K562 (cell line): ENCODE measurements at regions of chr11 and their contacts with region 1.

Region 1: DNA sequence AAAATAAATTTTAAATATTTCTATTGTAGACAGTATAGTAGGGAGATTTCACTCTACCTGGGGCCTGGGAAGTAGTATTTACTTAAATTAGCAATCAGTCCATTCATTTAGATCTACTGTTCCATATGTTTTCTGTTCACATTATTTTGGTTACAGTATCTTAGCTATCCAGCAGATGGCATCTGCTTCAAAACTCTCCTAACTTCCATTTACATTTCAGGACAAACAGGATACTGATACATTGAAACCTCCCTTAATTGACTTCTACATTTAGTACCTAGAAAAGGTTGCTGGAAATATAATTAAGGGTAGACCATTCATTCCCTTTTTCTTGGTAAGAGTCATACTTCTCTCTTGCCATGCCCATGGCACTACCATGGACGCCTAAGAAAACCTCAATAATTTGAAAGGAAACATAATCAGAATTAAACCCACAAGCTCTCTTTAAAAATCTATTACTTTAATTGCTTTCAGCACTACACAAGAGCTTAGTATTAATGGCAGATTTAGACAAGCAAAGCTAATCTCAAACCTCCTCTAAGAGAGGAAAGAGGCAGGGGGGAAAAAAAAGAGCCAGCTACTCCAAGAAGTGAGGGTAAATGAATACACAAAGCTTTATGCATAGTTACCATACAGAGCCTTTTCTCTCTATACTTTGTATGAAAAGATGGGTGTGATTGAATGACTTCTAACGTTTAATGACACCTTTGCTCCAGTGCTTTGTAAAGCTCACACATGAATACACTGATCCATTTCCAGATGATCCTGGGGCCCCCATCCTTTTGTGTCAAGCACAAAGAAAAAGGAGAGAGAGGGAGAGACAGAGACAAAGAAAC is 131.2 kb upstream of the MTMR2 start:
- DNase-seq: peak; percentile 28 to 43 (median 32)
- ATAC-seq: peak; percentile 88
- H3K4me3 ChIP-seq: no peak overlapping the region
- H3K27ac ChIP-seq: no peak overlapping the region
- H3K4me1 ChIP-seq: no peaks in the 10 kb centered on the region; a peak in 1 of 5 replicates
- H3K27me3 ChIP-seq: no peaks in the 10 kb centered on the region
- CTCF ChIP-seq: peak; percentile 45 to 75 (median 57); a peak in 4 of 6 replicates
- EP300 ChIP-seq: no peak
- POLR2A ChIP-seq: no peak
- RAD21 ChIP-seq: peak; percentile 82 to 92

Region 2: DNA sequence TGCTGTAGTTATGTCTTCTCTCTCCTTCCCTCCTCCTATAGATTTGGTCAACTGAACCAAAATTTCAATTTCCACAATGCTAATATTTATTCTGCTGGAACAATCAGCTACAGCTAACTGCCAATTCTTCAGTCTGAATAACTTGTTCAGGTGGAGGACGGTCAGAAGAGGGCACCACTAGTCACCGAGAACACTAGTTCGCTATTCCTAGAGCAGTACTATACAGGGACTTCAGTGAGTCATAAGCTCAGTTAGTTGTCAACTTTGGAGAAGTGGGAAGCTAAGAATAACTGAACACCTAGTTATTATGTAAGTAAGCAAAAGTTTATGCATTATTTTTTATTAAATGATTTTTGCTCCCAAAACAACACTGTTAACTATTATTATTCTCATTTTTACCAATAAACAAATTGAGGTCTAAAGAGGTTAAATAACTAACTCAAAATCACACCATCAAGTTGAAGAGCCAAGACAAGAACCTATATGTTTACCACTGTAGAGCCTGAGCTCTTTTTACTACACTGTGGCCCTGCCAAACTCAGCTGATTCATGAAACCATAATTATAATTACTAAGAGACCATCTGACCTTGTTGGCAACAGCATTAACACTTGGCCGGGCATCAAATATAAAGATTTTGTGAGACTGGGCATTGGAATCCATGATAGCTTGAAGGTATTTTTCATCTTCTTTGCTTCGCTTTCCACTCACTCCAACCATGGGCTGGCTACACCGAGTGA is 205.8 kb before region 1 on chr11:
- CTCF ChIA-PET with region 1: no interaction called
- POLR2A ChIA-PET with region 1: no interaction called
- in situ Hi-C with region 1: no loop called
- intact Hi-C with region 1: loop called (anchors 2 kb)
- DNase-seq: peak; percentile 18 to 65 (median 30)
- ATAC-seq: peak; percentile 96
- H3K4me3 ChIP-seq: no peak overlapping the region
- H3K27ac ChIP-seq: no peak overlapping the region
- H3K4me1 ChIP-seq: no peaks in the 10 kb centered on the region
- H3K27me3 ChIP-seq: no peaks in the 10 kb centered on the region
- CTCF ChIP-seq: peak; percentile 50 to 70 (median 61)
- EP300 ChIP-seq: no peak
- POLR2A ChIP-seq: no peak
- RAD21 ChIP-seq: peak; percentile 77 to 85

Region 3: GRCh38 chr11:95977534-95978174 is 77.4 kb before region 1 on chr11:
- CTCF ChIA-PET with region 1: no interaction called
- POLR2A ChIA-PET with region 1: no interaction called
- in situ Hi-C with region 1: no loop called
- intact Hi-C with region 1: no loop called
- DNase-seq: no peak
- ATAC-seq: no peak
- H3K4me3 ChIP-seq: no peak overlapping the region
- H3K27ac ChIP-seq: no peak overlapping the region
- H3K4me1 ChIP-seq: no peaks in the 10 kb centered on the region
- H3K27me3 ChIP-seq: no peaks in the 10 kb centered on the region
- CTCF ChIP-seq: no peak
- EP300 ChIP-seq: no peak
- POLR2A ChIP-seq: no peak
- RAD21 ChIP-seq: no peak

Region 4: DNA sequence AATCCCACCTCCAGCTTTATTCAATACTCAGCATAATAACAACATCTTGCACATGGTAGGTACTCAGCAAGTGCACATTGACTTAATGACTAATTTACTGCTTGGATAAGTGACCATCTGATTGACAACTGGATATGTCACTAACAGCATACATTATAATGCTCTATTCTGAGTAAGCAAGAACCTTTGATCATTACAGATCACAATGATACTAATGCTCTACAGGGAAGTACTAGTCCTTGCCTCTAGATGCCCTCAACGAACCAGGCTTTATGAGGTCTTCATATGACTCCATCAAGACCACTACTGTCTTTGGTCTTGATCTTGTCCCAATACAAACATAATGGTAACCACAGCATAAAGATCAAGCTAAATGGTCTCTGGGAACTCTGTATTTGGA is 36.4 kb after region 1 on chr11:
- CTCF ChIA-PET with region 1: no interaction called
- POLR2A ChIA-PET with region 1: no interaction called
- in situ Hi-C with region 1: no loop called
- intact Hi-C with region 1: no loop called
- DNase-seq: no peak
- ATAC-seq: peak; percentile 67
- H3K4me3 ChIP-seq: no peak overlapping the region
- H3K27ac ChIP-seq: no peak overlapping the region
- H3K4me1 ChIP-seq: peaks cover 2 to 4% of the 10 kb centered on the region in 2 experiments; a peak in 4 of 5 replicates
- H3K27me3 ChIP-seq: no peaks in the 10 kb centered on the region
- CTCF ChIP-seq: peak; percentile 26 to 38 (median 29); a peak in 3 of 6 replicates
- EP300 ChIP-seq: no peak
- POLR2A ChIP-seq: no peak
- RAD21 ChIP-seq: peak; percentile 29 to 58; a peak in 3 of 4 replicates

Region 5: GRCh38 chr11:96155627-96156378 is 100.7 kb after region 1 on chr11:
- CTCF ChIA-PET with region 1: interaction called, 7 read pairs
- POLR2A ChIA-PET with region 1: no interaction called
- in situ Hi-C with region 1: no loop called
- intact Hi-C with region 1: loop called (anchors 1 kb)
- DNase-seq: peak; percentile 66 to 87 (median 76)
- ATAC-seq: peak; percentile 86
- H3K4me3 ChIP-seq: no peak overlapping the region
- H3K27ac ChIP-seq: peak overlapping the region; percentile 87
- H3K4me1 ChIP-seq: peaks cover 12 to 36% of the 10 kb centered on the region in 2 experiments; a peak in 4 of 5 replicates
- H3K27me3 ChIP-seq: no peaks in the 10 kb centered on the region
- CTCF ChIP-seq: peak; percentile 51 to 64 (median 53)
- EP300 ChIP-seq: 0 out of 2 replicates have a peak, but pooled peaks have one; percentile 4
- POLR2A ChIP-seq: no peak; the same call in 1 of the 2 replicates
- RAD21 ChIP-seq: peak; percentile 59 to 70

Region 6: GRCh38 chr11:96215110-96215782 is 160.2 kb after region 1 on chr11:
- CTCF ChIA-PET with region 1: no interaction called
- POLR2A ChIA-PET with region 1: no interaction called
- in situ Hi-C with region 1: no loop called
- intact Hi-C with region 1: loop called (anchors 2 kb)
- DNase-seq: peak in 2 of 4 experiments; percentile 16 to 20
- ATAC-seq: peak; percentile 22
- H3K4me3 ChIP-seq: no peak overlapping the region
- H3K27ac ChIP-seq: peak overlapping the region; percentile 50
- H3K4me1 ChIP-seq: peaks cover 9 to 63% of the 10 kb centered on the region in 2 experiments
- H3K27me3 ChIP-seq: no peaks in the 10 kb centered on the region
- CTCF ChIP-seq: no peak
- EP300 ChIP-seq: no peak
- POLR2A ChIP-seq: no peak
- RAD21 ChIP-seq: no peak

Region 7: DNA sequence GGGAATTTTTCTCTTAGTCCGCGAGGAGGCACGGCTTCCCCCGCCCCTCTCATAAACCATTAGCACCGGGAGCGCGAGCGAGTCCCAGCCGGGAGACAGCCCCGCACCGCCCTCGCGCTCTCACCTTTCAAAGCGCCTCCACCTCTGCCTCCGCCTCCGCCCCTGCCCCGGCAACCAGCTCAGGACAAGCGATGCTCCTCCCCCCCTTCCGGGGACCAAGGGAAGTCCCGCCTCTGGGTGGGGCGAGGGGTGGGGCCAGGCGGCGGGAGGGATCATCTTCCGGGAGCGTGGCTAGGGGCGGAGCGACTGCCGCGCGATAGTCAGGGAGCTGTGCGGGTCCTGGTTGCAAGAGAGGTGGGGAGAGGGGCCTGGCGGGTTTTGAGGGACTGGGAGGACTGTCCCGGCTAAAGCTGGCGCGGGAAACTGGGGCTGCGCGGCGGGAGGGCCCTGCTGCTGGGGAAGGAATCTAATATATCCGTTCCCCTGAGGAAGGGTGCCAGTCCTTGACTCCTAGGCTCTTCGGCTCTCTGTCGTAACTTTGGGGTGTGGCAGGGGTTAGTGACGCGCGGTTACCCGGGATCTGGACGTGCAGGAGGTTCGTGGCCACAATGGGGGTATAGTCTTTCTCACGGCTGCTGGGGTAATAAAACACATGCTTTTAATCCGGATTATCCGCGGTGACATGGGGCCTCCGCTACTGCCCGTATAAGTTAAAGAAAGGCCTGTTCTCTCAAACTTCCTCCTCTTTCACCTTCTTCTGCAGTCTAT is 334.8 kb after region 1 on chr11 and contains the starts of genes CCDC82 and JRKL:
- CTCF ChIA-PET with region 1: interaction called, 3 read pairs
- POLR2A ChIA-PET with region 1: interaction called, 5 read pairs
- in situ Hi-C with region 1: no loop called
- intact Hi-C with region 1: loop called (anchors 2 kb)
- DNase-seq: peak; percentile 97 to 98 (median 98)
- ATAC-seq: peak; percentile 97
- H3K4me3 ChIP-seq: peak within 1 kb of the TSS; percentile 67
- H3K27ac ChIP-seq: peak within 1 kb of the TSS; percentile 87
- H3K4me1 ChIP-seq: peaks cover 0 to 4% of the 10 kb centered on the region in 2 experiments; a peak in 1 of 5 replicates
- H3K27me3 ChIP-seq: no peaks in the 10 kb centered on the region
- CTCF ChIP-seq: peak in 1 of 3 experiments; percentile 15; a peak in 1 of 6 replicates
- EP300 ChIP-seq: no peak; the same call in 1 of the 2 replicates
- POLR2A ChIP-seq: peak; percentile 91
- RAD21 ChIP-seq: 0 out of 4 replicates have a peak, but pooled peaks of 1 of the 2 experiments have one; percentile 12
- polyA plus RNA-seq, gene CCDC82: 23.7 to 24.7 TPM
- polyA plus RNA-seq, gene JRKL: 4.8 to 6.8 TPM

Region 8: GRCh38 chr11:96424693-96425092 is 369.6 kb after region 1 on chr11:
- CTCF ChIA-PET with region 1: no interaction called
- POLR2A ChIA-PET with region 1: no interaction called
- in situ Hi-C with region 1: no loop called
- intact Hi-C with region 1: loop called (anchors 1 kb)
- DNase-seq: no peak
- ATAC-seq: no peak
- H3K4me3 ChIP-seq: no peak overlapping the region
- H3K27ac ChIP-seq: no peak overlapping the region
- H3K4me1 ChIP-seq: no peaks in the 10 kb centered on the region
- H3K27me3 ChIP-seq: no peaks in the 10 kb centered on the region
- CTCF ChIP-seq: no peak
- EP300 ChIP-seq: no peak
- POLR2A ChIP-seq: no peak
- RAD21 ChIP-seq: no peak